CD14-positive monocyte (primary cell): ENCODE measurements at regions of chr14 and their contacts with region 1.

Region 1: DNA sequence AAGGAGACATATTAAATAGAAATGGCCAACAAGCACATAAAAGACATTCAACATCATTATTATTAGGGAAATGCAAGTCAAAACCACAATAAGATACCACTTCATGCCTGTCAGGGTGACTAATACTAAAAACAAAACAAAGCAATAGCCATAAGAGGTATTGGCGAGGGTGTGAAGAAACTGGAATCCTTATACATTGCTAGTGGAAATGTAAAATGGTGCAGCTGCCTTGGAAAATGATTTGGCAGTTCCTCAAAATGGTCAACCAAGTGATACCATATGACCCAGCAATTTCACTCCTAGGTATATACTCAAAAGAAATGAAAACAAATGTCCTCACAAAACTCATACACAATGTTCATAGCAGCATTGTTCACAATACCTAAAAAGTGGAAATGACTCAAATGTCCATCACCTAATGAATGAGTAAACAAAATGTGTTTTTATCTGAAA is 27.0 kb downstream of the GPR135 start:
- DNase-seq: no peak
- H3K4me3 ChIP-seq: no peak overlapping the region
- H3K4me3 Mint-ChIP-seq: no peak overlapping the region
- H3K27ac ChIP-seq: no peak overlapping the region
- H3K27ac Mint-ChIP-seq: no peak overlapping the region
- H3K4me1 ChIP-seq: peaks cover 12 to 27% of the 10 kb centered on the region in 2 donors
- H3K4me1 Mint-ChIP-seq: peaks cover 29% of the 10 kb centered on the region
- H3K27me3 ChIP-seq: no peaks in the 10 kb centered on the region
- H3K27me3 Mint-ChIP-seq: peaks cover 0 to 1% (median 1%) of the 10 kb centered on the region in 3 donors
- CTCF ChIP-seq: no peak

Region 2: GRCh38 chr14:59126710-59127432 is 311.4 kb before region 1 on chr14:
- intact Hi-C with region 1: loop called in 1 of 2 experiments (anchors 2 kb)
- DNase-seq: peak; percentile 32 to 57 (median 49)
- H3K4me3 ChIP-seq: no peak overlapping the region
- H3K4me3 Mint-ChIP-seq: no peak overlapping the region
- H3K27ac ChIP-seq: no peak overlapping the region
- H3K27ac Mint-ChIP-seq: no peak overlapping the region
- H3K4me1 ChIP-seq: no peaks in the 10 kb centered on the region
- H3K4me1 Mint-ChIP-seq: no peaks in the 10 kb centered on the region
- H3K27me3 ChIP-seq: no peaks in the 10 kb centered on the region
- H3K27me3 Mint-ChIP-seq: peaks cover 0 to 3% (median 0%) of the 10 kb centered on the region in 3 donors
- CTCF ChIP-seq: peak; percentile 83